Astrocyte of the cerebellum (primary cell): ENCODE measurements at regions of chr1 and their contacts with region 1.

Region 1: GRCh38 chr1:61481313-61481712 is 243.6 kb downstream of the TM2D1 start:
- DNase-seq: no peak
- H3K4me3 ChIP-seq: no peak overlapping the region
- CTCF ChIP-seq: no peak

Region 2: DNA sequence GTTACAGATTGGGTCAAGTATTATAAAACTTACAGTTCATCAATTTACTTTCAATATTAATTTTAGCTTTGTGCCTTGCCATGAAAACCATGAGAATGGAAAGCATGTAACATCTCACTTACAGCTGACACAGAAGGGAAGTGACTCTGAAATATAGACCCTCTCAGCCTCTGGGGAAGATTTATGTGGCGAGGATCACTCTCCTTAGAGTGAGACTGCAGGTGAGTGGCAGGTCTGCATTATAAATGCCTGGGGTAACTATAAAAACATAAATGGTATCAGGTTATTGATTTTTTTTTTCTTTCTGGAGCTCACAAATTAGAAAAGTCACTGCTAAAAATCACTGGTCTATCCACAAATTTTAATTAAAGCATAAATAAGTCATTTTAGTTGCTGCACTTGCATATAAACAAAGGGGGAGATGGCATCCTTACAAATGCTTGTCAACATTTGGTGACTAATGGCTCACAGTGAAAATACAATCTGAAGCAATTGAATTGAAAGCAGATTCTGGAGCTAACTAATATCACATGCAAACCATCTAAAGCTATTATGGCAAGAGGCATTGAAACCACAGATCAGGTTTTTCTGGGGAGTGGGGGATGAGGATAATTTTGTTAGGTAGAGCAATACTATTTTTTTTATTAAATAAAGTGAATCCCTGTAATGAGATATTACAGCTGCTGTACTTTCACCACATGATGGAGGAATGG is 42.7 kb after region 1 on chr1:
- in situ Hi-C with region 1: loop called (anchors 5 kb)
- DNase-seq: no peak
- H3K4me3 ChIP-seq: no peak overlapping the region
- CTCF ChIP-seq: no peak

Region 3: DNA sequence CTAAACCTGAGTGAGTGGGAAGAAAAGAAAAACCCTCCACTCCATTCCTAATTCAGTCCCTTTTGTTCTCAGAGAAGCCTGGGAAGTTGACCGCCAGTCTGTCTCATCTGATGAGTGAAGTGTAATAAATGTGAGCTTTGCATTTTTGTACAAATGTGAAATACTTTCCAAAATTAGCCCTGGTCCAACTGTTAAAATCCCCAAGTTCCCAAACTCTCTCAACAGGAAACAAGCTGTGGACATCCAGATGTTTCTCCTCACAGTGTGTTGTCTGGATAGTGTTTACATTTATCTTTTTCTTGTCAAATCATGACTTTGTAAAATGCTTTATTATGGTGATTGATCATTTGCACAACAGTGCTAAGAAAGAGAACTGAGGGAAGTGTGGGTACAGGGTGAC is 98.5 kb after region 1 on chr1:
- in situ Hi-C with region 1: no loop called
- DNase-seq: no peak
- H3K4me3 ChIP-seq: no peak overlapping the region
- CTCF ChIP-seq: no peak

Region 4: DNA sequence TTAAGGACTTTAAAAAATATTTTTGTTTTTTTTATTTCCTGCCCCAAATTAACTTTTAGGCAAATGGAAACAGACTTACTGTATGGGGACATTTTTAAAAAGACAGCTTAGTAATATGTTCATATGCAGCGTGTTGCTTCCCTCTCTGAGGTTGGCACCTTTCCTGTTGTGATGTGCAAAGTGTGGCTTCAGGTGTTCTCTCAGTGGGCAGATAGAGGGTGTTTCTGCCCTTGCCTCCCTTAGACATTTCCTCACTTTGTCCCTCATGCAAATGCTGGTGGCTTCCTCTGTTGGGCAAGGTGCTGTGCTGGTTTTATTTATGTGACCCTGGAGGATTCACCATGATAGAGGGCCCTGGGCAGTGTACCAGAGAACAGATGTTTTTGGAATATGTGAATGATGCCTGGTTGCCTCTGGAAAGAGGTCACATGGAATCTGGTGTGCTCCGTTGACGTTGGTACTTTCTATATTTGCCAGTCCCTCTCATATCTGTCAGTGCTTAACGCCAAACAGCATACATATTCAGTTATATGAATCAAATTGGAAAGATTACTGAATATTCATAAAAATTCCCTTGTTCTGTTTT is 384.4 kb after region 1 on chr1:
- in situ Hi-C with region 1: no loop called
- DNase-seq: no peak
- H3K4me3 ChIP-seq: no peak overlapping the region
- CTCF ChIP-seq: no peak